Psoas muscle (tissue), 8 donors: ENCODE measurements at regions of chr3 and their contacts with region 1.

Region 1: GRCh38 chr3:48151058-48151806 is 37.0 kb downstream of the CDC25A start:
- DNase-seq: peak; percentile 68 to 88
- ATAC-seq: peak; percentile 98 to 100 (median 98)
- H3K4me3 ChIP-seq: no peak overlapping the region
- H3K27ac ChIP-seq: peak overlapping the region; percentile 32
- H3K4me1 ChIP-seq: peaks cover 8% of the 10 kb centered on the region
- H3K27me3 ChIP-seq: no peaks in the 10 kb centered on the region
- CTCF ChIP-seq: peak; percentile 87

Region 2: DNA sequence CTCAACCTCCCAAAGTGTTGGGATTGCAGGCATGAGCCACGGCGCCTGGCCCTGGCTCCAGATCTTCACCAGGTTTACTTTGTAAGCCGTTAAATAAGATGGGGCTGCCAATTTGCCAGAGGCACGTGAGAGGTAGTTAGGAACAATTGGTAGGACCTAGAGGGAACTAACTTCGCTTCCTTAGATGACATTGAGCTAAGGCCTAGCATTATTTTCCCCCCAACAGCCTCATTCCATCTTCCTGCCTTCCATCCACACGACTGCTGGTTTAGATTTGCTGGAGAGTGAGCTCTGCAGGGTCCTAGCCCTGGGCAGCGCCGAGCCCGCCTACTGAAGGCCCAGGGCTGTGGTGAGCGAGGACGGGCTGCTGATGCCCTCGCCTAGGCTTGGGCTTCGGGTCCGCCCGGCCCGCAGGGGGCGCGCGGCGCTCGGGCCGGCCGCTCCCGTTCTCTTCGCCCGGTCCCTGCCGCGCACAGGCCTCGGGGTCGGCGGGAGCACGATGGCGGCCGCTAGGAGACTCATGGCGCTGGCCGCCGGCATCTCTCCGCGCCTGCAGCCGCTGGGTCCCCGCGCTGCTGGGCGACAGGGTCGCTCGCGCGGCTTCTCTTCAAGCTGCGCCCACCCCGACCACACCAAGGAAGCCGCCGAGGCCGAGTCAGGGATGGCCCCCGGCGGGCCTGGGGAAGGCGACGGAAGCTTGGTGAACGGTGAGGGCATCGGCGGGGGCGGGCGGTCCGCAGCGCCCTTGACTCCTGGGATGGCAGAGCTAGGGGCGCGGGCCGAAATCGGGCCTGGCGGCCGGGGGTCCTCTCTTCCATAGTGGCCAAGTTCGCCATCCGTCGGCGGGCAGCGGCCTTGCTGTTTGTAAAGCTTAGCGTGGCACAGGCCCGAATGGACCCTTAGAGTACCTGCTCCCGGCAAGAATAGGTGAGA is 326.4 kb before region 1 on chr3:
- intact Hi-C with region 1: loop called in 1 of 2 experiments (anchors 5 kb)
- DNase-seq: peak; percentile 83 to 89
- ATAC-seq: peak; percentile 98 to 100 (median 99)
- H3K4me3 ChIP-seq: peak overlapping the region; percentile 93
- H3K27ac ChIP-seq: peak overlapping the region; percentile 85
- H3K4me1 ChIP-seq: peaks cover 13% of the 10 kb centered on the region
- H3K27me3 ChIP-seq: no peaks in the 10 kb centered on the region
- CTCF ChIP-seq: peak; percentile 84

Region 3: DNA sequence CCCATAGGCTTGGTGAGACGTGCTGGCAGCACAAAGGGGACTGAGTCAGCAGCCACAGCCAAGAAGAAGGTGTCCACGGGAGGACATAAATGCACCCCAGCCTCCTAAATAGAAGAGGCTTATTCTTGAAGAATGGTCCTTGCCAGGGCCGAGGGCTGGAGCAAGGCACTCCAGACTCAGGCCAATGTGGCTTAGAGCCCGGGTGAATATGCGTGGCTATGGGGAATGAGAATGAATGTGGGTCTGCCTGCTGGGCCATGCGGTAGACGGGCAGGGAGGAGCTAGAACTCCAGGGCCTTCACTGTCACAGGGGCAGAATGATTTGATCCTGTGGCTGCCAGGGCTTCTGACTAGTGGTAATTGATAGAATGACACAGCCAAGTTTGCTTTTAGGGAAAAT is 314.2 kb before region 1 on chr3:
- intact Hi-C with region 1: loop called in 1 of 2 experiments (anchors 5 kb)
- DNase-seq: no peak
- ATAC-seq: no peak
- H3K4me3 ChIP-seq: no peak overlapping the region
- H3K27ac ChIP-seq: no peak overlapping the region
- H3K4me1 ChIP-seq: no peaks in the 10 kb centered on the region
- H3K27me3 ChIP-seq: no peaks in the 10 kb centered on the region
- CTCF ChIP-seq: no peak

Region 4: GRCh38 chr3:47989981-47990440 is 161.2 kb before region 1 on chr3:
- intact Hi-C with region 1: loop called (anchors 5 to 10 kb)
- DNase-seq: peak; percentile 78 to 88
- ATAC-seq: peak; percentile 97 to 99 (median 98)
- H3K4me3 ChIP-seq: no peak overlapping the region
- H3K27ac ChIP-seq: peak overlapping the region; percentile 72
- H3K4me1 ChIP-seq: peaks cover 44% of the 10 kb centered on the region
- H3K27me3 ChIP-seq: no peaks in the 10 kb centered on the region
- CTCF ChIP-seq: peak; percentile 90

Region 5: DNA sequence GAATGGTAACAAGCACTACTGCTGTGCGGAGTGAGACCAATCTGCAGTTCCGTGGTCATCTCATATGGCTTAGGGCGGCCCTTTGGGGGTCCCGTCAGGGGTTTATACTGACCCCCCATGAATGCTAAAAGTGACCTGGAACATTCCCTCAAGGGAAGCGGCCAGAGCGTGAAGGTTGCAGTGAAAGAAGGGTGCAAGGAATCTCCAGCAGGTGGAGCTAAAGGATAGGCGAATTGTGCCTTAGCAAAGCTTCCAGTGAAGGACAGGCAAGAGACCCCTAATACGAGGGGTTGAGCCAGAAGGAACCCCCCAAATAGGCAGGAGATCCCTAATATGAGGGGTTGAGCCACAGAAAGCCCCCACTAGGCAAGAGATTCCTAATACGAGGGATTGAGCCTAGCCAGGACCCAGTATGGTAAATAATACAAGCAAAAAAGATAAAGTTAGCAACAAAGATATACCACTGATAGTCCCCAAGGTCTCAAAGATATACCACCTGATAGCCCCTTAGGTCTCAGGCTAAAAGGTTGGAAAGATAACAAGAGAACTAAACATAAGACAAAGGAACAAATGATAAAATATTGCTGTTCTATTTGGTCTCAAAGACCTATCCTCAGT is 122.5 kb after region 1 on chr3:
- intact Hi-C with region 1: no loop called
- DNase-seq: no peak
- ATAC-seq: peak; percentile 51 to 84 (median 70)
- H3K4me3 ChIP-seq: no peak overlapping the region
- H3K27ac ChIP-seq: no peak overlapping the region
- H3K4me1 ChIP-seq: no peaks in the 10 kb centered on the region
- H3K27me3 ChIP-seq: no peaks in the 10 kb centered on the region
- CTCF ChIP-seq: peak; percentile 75